Heart right ventricle (tissue), 16 donors: ENCODE measurements at regions of chr7 and their contacts with region 1.

Region 1: DNA sequence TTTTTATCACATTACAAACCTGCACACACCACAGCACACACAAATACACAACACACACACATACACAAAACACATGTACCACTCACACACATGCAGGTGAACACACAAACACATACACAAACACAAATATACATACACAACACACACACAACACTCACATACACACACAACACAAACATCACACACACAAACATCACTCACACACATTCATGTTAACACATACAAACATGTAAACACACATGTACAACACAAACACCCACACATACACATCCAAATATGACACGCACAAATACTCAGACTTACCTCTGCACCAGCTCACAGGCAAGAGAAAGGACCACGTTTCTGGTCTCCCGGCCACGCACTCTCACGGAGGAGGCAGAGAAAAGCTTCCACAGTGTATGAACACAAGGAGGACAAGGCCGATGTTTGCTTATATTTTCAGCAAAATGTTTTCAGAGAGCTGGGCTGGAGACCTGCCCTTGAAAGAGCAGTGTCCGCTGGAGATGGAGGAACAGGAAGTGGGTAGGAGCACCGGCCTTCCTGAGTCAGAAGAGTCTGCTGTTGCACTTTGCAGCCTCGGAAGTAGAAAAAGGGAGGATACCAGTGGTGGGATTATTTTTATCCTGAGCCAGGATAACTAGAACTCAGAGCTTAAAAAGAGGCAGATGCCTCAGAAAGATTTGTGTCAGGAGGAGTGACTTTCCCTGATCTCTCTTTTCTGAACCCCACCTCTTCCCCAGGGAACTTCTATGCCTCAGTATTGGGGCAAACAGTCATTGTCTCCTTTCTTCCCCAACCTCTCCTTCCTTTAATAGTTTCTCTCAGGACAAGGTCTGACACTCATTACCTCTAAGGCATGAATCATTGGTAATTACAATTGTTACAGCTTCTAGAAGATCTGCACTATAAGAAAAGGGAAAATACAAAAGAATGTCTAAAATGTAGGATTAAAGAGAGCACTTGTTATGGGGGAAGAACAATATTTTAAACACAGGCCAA is at the start of gene GIMAP6:
- DNase-seq: peak; percentile 18 to 43
- ATAC-seq: peak in 6 of 8 donors; percentile 14 to 63 (median 38)
- H3K4me3 ChIP-seq: peak within 1 kb of the TSS; percentile 19 to 64 (median 53)
- H3K27ac ChIP-seq: peak within 1 kb of the TSS; percentile 85 to 98 (median 94)
- H3K4me1 ChIP-seq: peaks cover 17 to 66% (median 37%) of the 10 kb centered on the region in 9 donors
- H3K27me3 ChIP-seq: no peaks in the 10 kb centered on the region
- CTCF ChIP-seq: no peak
- total RNA-seq, gene GIMAP6: 13.7 to 42.9 (median 25.5) TPM

Region 2: GRCh38 chr7:150481186-150481920 is 150.8 kb before region 1 on chr7:
- intact Hi-C with region 1: loop called in 1 of 10 experiments (anchors 10 kb)
- DNase-seq: no peak
- ATAC-seq: peak in 4 of 8 donors; percentile 15 to 31 (median 30)
- H3K4me3 ChIP-seq: peak overlapping the region in 1 of 10 donors; percentile 2
- H3K27ac ChIP-seq: peak overlapping the region in 9 of 10 donors; percentile 34 to 93 (median 63)
- H3K4me1 ChIP-seq: peaks cover 0 to 87% (median 68%) of the 10 kb centered on the region in 9 donors
- H3K27me3 ChIP-seq: no peaks in the 10 kb centered on the region
- CTCF ChIP-seq: no peak

Region 3: GRCh38 chr7:150520145-150520544 is 112.0 kb before region 1 on chr7:
- intact Hi-C with region 1: loop called in 3 of 10 experiments (anchors 2 to 5 kb)
- DNase-seq: no peak
- ATAC-seq: peak in 2 of 8 donors; percentile 47 to 52
- H3K4me3 ChIP-seq: peak overlapping the region in 9 of 10 donors; percentile 9 to 68 (median 57)
- H3K27ac ChIP-seq: peak overlapping the region; percentile 27 to 95 (median 80)
- H3K4me1 ChIP-seq: peaks cover 0 to 10% (median 0%) of the 10 kb centered on the region in 9 donors
- H3K27me3 ChIP-seq: no peaks in the 10 kb centered on the region
- CTCF ChIP-seq: no peak

Region 4: GRCh38 chr7:150675714-150676113 is 43.5 kb after region 1 on chr7:
- intact Hi-C with region 1: loop called in 1 of 10 experiments (anchors 2 kb)
- DNase-seq: no peak
- ATAC-seq: peak in 1 of 8 donors; percentile 51
- H3K4me3 ChIP-seq: peak overlapping the region in 3 of 10 donors; percentile 7 to 18 (median 11)
- H3K27ac ChIP-seq: peak overlapping the region; percentile 6 to 88 (median 68)
- H3K4me1 ChIP-seq: peaks cover 0 to 43% (median 20%) of the 10 kb centered on the region in 9 donors
- H3K27me3 ChIP-seq: no peaks in the 10 kb centered on the region
- CTCF ChIP-seq: no peak

Region 5: GRCh38 chr7:150737265-150738055 is 105.3 kb after region 1 on chr7 and contains the start of gene GIMAP5:
- intact Hi-C with region 1: loop called in 6 of 10 experiments (anchors 5 to 10 kb)
- DNase-seq: no peak
- ATAC-seq: peak; percentile 58 to 78 (median 74)
- H3K4me3 ChIP-seq: peak within 1 kb of the TSS; percentile 8 to 68 (median 60)
- H3K27ac ChIP-seq: peak within 1 kb of the TSS; percentile 66 to 93 (median 88)
- H3K4me1 ChIP-seq: peaks cover 0 to 39% (median 30%) of the 10 kb centered on the region in 9 donors
- H3K27me3 ChIP-seq: no peaks in the 10 kb centered on the region
- CTCF ChIP-seq: no peak
- total RNA-seq, gene GIMAP5: 6.5 to 27.2 (median 11.8) TPM

Region 6: GRCh38 chr7:150941981-150942590 is 309.9 kb after region 1 on chr7:
- intact Hi-C with region 1: no loop called
- DNase-seq: peak; percentile 66 to 73
- ATAC-seq: peak; percentile 49 to 78 (median 59)
- H3K4me3 ChIP-seq: no peak overlapping the region
- H3K27ac ChIP-seq: peak overlapping the region in 4 of 10 donors; percentile 36 to 60 (median 52)
- H3K4me1 ChIP-seq: peaks cover 3 to 40% (median 23%) of the 10 kb centered on the region in 9 donors
- H3K27me3 ChIP-seq: peaks cover 0 to 31% (median 10%) of the 10 kb centered on the region in 7 donors
- CTCF ChIP-seq: no peak